H1 (cell line): ENCODE measurements at regions of chr5 and their contacts with region 1.

Region 1: DNA sequence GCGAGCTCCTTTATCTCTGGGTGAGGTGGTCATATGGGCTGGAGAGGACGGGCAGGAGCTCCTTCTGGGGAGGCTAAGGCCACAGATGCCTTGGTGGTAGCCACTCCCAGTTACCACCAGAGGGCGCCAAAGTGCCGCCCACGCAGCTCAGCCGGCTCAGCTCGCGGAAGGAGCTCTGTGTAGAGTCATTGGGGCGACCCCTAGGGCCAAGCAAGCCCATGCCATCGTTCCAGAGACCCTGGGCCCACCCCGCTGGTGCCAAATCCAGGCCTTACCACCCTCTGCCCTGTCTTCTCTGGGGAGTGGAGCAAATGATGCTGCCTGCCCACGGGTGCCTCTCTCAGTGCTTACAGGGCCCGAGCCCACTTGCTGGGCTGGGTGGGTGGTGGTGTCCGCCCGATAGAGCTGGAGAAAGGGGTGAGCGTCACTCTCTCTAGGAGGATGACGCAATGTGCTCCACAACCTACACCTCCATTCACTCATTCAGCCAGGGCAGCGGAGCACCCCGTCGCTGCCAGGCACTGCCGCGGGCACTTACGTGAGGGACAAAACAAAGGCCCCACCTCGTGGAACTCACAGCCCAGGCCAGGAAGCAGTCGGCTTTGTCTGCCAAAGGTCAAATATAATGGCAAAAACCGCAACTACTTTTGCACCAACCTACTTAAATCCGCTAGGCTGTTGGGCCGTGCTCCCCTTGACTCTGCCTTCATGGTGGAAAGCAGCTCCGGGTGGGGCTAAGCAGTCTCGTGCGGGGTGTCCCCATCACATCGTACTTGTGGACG is 13.8 kb downstream of the TSPAN17 start:
- DNase-seq: peak; percentile 80 to 89
- H3K4me3 ChIP-seq: no peak overlapping the region
- H3K27ac ChIP-seq: no peak overlapping the region
- H3K4me1 ChIP-seq: peaks cover 0 to 12% (median 8%) of the 10 kb centered on the region in 4 experiments; a peak in 6 of 7 replicates
- H3K27me3 ChIP-seq: no peaks in the 10 kb centered on the region
- CTCF ChIP-seq: peak in 2 of 3 experiments; percentile 98 to 99; a peak in 3 of 4 replicates
- EP300 ChIP-seq: no peak
- POLR2A ChIP-seq: no peak
- RAD21 ChIP-seq: peak; percentile 100

Region 2: DNA sequence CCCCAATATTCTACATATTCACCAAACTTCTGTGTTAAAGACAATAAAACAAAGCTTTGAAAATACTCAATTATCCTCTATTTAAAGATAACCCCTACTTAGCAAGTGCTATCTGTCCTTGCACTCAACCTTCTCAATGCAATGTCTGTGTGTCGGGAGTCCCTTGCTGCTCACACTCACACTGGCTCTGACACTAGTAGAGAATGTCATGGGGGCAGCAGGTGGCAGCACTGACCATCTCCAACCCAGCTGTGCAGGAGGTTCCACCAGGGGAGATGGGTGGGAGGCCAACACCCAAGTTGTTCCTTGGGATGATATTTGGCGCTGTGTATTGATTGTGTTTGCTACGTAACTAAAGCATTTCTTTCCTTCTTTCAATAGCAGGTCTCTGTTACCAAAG is 482.3 kb before region 1 on chr5:
- CTCF ChIA-PET with region 1: no interaction called
- POLR2A ChIA-PET with region 1: no interaction called
- DNase-seq: no peak
- H3K4me3 ChIP-seq: no peak overlapping the region
- H3K27ac ChIP-seq: no peak overlapping the region
- H3K4me1 ChIP-seq: peaks cover 0 to 3% (median 1%) of the 10 kb centered on the region in 4 experiments; a peak in 1 of 7 replicates
- H3K27me3 ChIP-seq: peaks cover 0 to 6% (median 3%) of the 10 kb centered on the region in 4 experiments; a peak in 2 of 7 replicates
- CTCF ChIP-seq: peak in 2 of 3 experiments; percentile 26 to 33; a peak in 2 of 4 replicates
- EP300 ChIP-seq: no peak
- POLR2A ChIP-seq: no peak
- RAD21 ChIP-seq: peak; percentile 18 to 37; a peak in 2 of 4 replicates

Region 3: DNA sequence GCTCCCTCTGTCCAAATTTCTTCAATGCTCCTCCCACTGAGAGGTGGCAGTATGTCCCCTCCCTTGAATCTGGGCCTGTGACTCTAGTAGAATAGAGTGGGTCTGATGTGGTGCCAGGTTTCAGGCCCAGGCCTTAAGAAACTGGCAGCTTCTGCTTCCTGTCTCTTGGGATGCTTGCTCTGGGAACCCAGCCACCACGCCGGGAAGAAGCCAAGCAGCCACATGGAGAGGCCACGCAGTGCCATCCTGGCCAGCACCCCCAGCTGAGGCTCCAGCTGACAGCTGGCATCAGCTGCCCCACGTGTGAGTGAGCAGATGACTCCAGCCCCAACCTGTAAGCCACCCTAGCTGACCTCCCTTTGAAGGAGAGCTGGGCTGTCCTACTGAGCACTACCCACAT is 21.1 kb before region 1 on chr5:
- CTCF ChIA-PET with region 1: interaction called, 14 read pairs
- POLR2A ChIA-PET with region 1: interaction called, 3 read pairs
- DNase-seq: no peak
- H3K4me3 ChIP-seq: no peak overlapping the region
- H3K27ac ChIP-seq: no peak overlapping the region
- H3K4me1 ChIP-seq: peaks cover 0 to 21% (median 14%) of the 10 kb centered on the region in 4 experiments; a peak in 6 of 7 replicates
- H3K27me3 ChIP-seq: no peaks in the 10 kb centered on the region
- CTCF ChIP-seq: no peak
- EP300 ChIP-seq: no peak
- POLR2A ChIP-seq: no peak
- RAD21 ChIP-seq: no peak

Region 4: DNA sequence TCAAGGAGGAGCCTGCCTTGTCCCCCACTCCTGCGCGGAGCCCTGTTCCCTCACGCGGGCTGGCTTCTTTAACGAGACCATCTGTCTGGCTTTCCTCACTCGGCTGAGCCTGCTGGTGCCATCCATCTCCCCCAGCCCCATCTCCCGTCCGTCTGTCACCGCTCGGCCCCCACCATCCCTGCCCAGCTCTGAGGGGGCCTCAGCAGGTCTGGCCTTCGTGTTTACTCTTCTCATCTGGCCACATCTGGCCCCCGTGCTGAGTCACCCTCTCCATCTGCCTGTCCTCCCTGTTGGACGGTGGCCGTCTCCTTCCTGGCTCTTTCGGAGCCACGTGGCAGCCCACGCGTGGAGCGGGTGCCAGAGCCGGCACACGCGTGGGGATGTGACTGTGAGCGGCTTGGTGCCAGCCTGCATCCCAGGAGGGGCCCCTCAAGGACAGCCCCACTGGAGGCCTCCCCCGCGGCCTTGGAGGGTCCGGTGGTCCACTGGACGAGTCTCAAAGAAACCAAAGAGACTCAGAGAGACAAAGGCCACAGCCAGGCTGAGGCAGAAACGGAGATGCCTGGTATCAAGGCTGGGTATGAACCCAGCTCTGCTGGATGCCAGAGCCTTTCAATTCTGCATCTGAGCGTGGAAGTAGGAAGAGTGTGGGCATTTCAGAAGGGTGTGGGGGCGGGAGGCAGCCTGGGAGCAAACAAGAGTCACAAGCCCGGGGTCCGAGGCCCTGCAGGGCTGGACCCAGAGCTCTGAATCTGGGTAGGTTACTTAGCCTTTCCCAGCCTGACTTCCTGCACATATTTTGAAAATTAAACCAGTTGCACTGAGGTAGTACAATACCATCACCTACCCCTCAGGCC is 72.6 kb after region 1 on chr5:
- CTCF ChIA-PET with region 1: interaction called, 56 read pairs
- POLR2A ChIA-PET with region 1: no interaction called
- DNase-seq: peak in 1 of 2 experiments; percentile 44
- H3K4me3 ChIP-seq: no peak overlapping the region
- H3K27ac ChIP-seq: no peak overlapping the region
- H3K4me1 ChIP-seq: peaks cover 0 to 11% (median 2%) of the 10 kb centered on the region in 4 experiments; a peak in 5 of 7 replicates
- H3K27me3 ChIP-seq: peaks cover 0 to 4% (median 2%) of the 10 kb centered on the region in 4 experiments; a peak in 3 of 7 replicates
- CTCF ChIP-seq: no peak
- EP300 ChIP-seq: no peak
- POLR2A ChIP-seq: no peak
- RAD21 ChIP-seq: no peak

Region 5: DNA sequence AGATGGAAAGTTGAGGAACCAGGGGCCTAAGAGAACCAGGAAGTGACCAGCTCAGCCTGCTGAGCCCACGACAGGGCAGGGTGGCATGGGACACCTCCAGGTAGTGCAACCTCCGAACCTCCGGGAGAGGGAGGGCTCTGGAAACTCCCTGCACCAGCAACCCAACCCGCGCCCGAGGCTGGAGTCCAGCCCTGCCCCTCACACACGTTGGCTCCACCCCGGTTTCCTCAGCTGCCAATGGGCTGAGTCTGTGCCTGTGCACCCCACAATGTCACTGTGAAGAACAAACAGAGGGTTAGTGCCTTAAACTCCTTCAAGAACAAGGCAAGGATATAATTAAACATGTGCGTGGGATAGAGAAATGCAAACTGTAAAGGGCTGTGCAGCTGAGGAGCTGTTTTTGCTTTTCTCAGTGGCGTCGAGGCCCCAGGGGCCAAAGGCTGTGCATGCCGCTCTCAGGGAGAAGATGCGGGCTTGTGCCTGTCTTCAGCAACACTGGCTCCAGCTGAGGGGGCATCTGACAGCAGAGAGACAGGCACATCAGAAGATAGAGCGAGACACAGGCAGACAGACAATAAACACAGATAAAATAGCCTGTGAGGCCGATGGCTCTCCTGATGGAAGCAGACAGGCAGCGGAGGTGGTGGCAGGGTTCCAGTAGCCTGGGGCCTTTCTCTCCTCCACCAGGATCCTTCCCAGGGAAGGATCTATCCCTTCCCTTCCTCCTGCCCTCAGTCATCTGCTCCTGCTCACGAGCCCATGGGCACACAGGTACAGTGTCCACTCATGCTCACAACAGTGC is 132.5 kb after region 1 on chr5:
- CTCF ChIA-PET with region 1: interaction called, 17 read pairs
- POLR2A ChIA-PET with region 1: interaction called, 4 read pairs
- DNase-seq: peak in 1 of 2 experiments; percentile 66
- H3K4me3 ChIP-seq: no peak overlapping the region
- H3K27ac ChIP-seq: no peak overlapping the region
- H3K4me1 ChIP-seq: peaks cover 0 to 17% (median 12%) of the 10 kb centered on the region in 4 experiments; a peak in 6 of 7 replicates
- H3K27me3 ChIP-seq: peaks cover 0 to 2% (median 0%) of the 10 kb centered on the region in 4 experiments; a peak in 1 of 7 replicates
- CTCF ChIP-seq: no peak
- EP300 ChIP-seq: no peak
- POLR2A ChIP-seq: no peak
- RAD21 ChIP-seq: no peak

Region 6: GRCh38 chr5:176837707-176838115 is 176.7 kb after region 1 on chr5:
- CTCF ChIA-PET with region 1: interaction called, 12 read pairs
- POLR2A ChIA-PET with region 1: interaction called, 4 read pairs
- DNase-seq: peak; percentile 41 to 95
- H3K4me3 ChIP-seq: no peak overlapping the region
- H3K27ac ChIP-seq: no peak overlapping the region
- H3K4me1 ChIP-seq: peaks cover 0 to 10% (median 5%) of the 10 kb centered on the region in 4 experiments; a peak in 6 of 7 replicates
- H3K27me3 ChIP-seq: peaks cover 0 to 20% (median 5%) of the 10 kb centered on the region in 4 experiments; a peak in 4 of 7 replicates
- CTCF ChIP-seq: no peak
- EP300 ChIP-seq: no peak
- POLR2A ChIP-seq: no peak
- RAD21 ChIP-seq: peak; percentile 13 to 46; a peak in 2 of 4 replicates

Region 7: GRCh38 chr5:176875783-176876505 is 214.9 kb after region 1 on chr5:
- CTCF ChIA-PET with region 1: interaction called, 34 read pairs
- POLR2A ChIA-PET with region 1: no interaction called
- DNase-seq: no peak
- H3K4me3 ChIP-seq: no peak overlapping the region
- H3K27ac ChIP-seq: no peak overlapping the region
- H3K4me1 ChIP-seq: peaks cover 0 to 4% (median 1%) of the 10 kb centered on the region in 4 experiments; a peak in 3 of 7 replicates
- H3K27me3 ChIP-seq: no peaks in the 10 kb centered on the region
- CTCF ChIP-seq: no peak
- EP300 ChIP-seq: no peak
- POLR2A ChIP-seq: no peak
- RAD21 ChIP-seq: no peak

Region 8: GRCh38 chr5:177113566-177114424 is 452.7 kb after region 1 on chr5:
- CTCF ChIA-PET with region 1: interaction called, 23 read pairs
- POLR2A ChIA-PET with region 1: no interaction called
- DNase-seq: peak in 1 of 2 experiments; percentile 93
- H3K4me3 ChIP-seq: no peak overlapping the region
- H3K27ac ChIP-seq: no peak overlapping the region
- H3K4me1 ChIP-seq: peaks cover 0 to 4% (median 4%) of the 10 kb centered on the region in 4 experiments; a peak in 3 of 7 replicates
- H3K27me3 ChIP-seq: peaks cover 0 to 4% (median 1%) of the 10 kb centered on the region in 4 experiments; a peak in 2 of 7 replicates
- CTCF ChIP-seq: peak in 2 of 3 experiments; percentile 93 to 99; a peak in 3 of 4 replicates
- EP300 ChIP-seq: peak in 1 of 2 experiments; percentile 55; a peak in 1 of 3 replicates
- POLR2A ChIP-seq: no peak
- RAD21 ChIP-seq: peak; percentile 99